Natural killer cell (primary cell): ENCODE measurements at regions of chr1 and their contacts with region 1.

Region 1: DNA sequence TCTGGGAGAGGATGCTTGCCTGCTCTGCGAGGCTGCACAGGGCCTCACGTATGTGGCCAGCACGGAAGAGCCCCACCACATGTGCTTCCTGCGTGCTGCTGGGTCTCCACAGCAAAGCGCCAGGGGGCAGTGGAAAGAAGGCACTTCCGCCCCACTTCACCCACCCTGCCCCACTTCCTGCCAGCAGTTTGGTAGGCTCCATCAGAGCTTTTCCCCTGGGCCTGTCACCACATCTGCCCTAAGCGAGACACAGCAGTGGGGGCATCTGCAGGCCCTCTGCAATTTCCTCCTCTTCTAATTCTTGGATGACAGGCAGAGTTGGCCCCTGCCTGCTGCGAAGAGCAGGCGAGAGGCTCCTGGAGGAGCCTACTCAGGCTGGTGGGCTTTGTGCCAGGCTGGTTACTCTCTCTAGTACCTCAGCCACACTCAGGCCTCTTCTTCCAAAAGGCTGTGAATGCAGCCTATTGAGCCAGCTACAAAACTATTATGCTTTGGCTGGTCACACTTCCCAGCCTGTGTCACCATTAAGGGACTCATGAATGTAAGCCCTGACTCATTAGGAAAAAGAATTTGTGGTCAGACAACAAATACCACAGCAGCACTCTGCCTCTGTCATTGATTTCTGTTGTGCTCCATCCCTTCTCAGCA is 25.0 kb downstream of the CD244 start:
- DNase-seq: peak; percentile 76 to 94
- ATAC-seq: peak; percentile 87 to 97 (median 95)
- H3K4me3 ChIP-seq: no peak overlapping the region
- H3K4me3 Mint-ChIP-seq: peak overlapping the region; percentile 83
- H3K27ac ChIP-seq: peak overlapping the region; percentile 70
- H3K27ac Mint-ChIP-seq: peak overlapping the region in 1 of 2 donors; percentile 95
- H3K4me1 ChIP-seq: peaks cover 80% of the 10 kb centered on the region
- H3K4me1 Mint-ChIP-seq: peaks cover 85 to 87% of the 10 kb centered on the region in 2 donors
- H3K27me3 ChIP-seq: no peaks in the 10 kb centered on the region
- H3K27me3 Mint-ChIP-seq: no peaks in the 10 kb centered on the region
- CTCF ChIP-seq: peak; percentile 42

Region 2: GRCh38 chr1:160795951-160796383 is 41.7 kb before region 1 on chr1 and contains the start of gene LY9:
- intact Hi-C with region 1: loop called (anchors 5 kb)
- DNase-seq: peak; percentile 66 to 96
- ATAC-seq: peak; percentile 84 to 93 (median 92)
- H3K4me3 ChIP-seq: peak within 1 kb of the TSS; percentile 39
- H3K4me3 Mint-ChIP-seq: peak within 1 kb of the TSS; percentile 90
- H3K27ac ChIP-seq: peak within 1 kb of the TSS; percentile 94
- H3K27ac Mint-ChIP-seq: peak within 1 kb of the TSS; percentile 91 to 95
- H3K4me1 ChIP-seq: peaks cover 49% of the 10 kb centered on the region
- H3K4me1 Mint-ChIP-seq: peaks cover 59 to 70% of the 10 kb centered on the region in 2 donors
- H3K27me3 ChIP-seq: no peaks in the 10 kb centered on the region
- H3K27me3 Mint-ChIP-seq: no peaks in the 10 kb centered on the region
- CTCF ChIP-seq: no peak
- total RNA-seq, gene LY9: 30.3 to 47.1 (median 34.4) TPM

Region 3: GRCh38 chr1:160862203-160863060 is 24.8 kb after region 1 on chr1 and contains the start of gene CD244:
- intact Hi-C with region 1: loop called (anchors 1 kb)
- DNase-seq: peak; percentile 79 to 81
- ATAC-seq: peak; percentile 88 to 97 (median 95)
- H3K4me3 ChIP-seq: peak within 1 kb of the TSS; percentile 66
- H3K4me3 Mint-ChIP-seq: peak within 1 kb of the TSS; percentile 97
- H3K27ac ChIP-seq: peak within 1 kb of the TSS; percentile 74
- H3K27ac Mint-ChIP-seq: peak within 1 kb of the TSS in 1 of 2 donors; percentile 93
- H3K4me1 ChIP-seq: peaks cover 65% of the 10 kb centered on the region
- H3K4me1 Mint-ChIP-seq: peaks cover 54 to 64% of the 10 kb centered on the region in 2 donors
- H3K27me3 ChIP-seq: no peaks in the 10 kb centered on the region
- H3K27me3 Mint-ChIP-seq: no peaks in the 10 kb centered on the region
- CTCF ChIP-seq: no peak
- total RNA-seq, gene CD244: 131 to 193 (median 150) TPM

Region 4: GRCh38 chr1:160877221-160877620 is 39.5 kb after region 1 on chr1:
- intact Hi-C with region 1: loop called (anchors 1 kb)
- DNase-seq: peak in 1 of 2 donors; percentile 75
- ATAC-seq: peak; percentile 82 to 97 (median 91)
- H3K4me3 ChIP-seq: no peak overlapping the region
- H3K4me3 Mint-ChIP-seq: no peak overlapping the region
- H3K27ac ChIP-seq: no peak overlapping the region
- H3K27ac Mint-ChIP-seq: peak overlapping the region in 1 of 2 donors; percentile 14
- H3K4me1 ChIP-seq: peaks cover 16% of the 10 kb centered on the region
- H3K4me1 Mint-ChIP-seq: peaks cover 16 to 17% of the 10 kb centered on the region in 2 donors
- H3K27me3 ChIP-seq: no peaks in the 10 kb centered on the region
- H3K27me3 Mint-ChIP-seq: no peaks in the 10 kb centered on the region
- CTCF ChIP-seq: peak; percentile 73

Region 5: DNA sequence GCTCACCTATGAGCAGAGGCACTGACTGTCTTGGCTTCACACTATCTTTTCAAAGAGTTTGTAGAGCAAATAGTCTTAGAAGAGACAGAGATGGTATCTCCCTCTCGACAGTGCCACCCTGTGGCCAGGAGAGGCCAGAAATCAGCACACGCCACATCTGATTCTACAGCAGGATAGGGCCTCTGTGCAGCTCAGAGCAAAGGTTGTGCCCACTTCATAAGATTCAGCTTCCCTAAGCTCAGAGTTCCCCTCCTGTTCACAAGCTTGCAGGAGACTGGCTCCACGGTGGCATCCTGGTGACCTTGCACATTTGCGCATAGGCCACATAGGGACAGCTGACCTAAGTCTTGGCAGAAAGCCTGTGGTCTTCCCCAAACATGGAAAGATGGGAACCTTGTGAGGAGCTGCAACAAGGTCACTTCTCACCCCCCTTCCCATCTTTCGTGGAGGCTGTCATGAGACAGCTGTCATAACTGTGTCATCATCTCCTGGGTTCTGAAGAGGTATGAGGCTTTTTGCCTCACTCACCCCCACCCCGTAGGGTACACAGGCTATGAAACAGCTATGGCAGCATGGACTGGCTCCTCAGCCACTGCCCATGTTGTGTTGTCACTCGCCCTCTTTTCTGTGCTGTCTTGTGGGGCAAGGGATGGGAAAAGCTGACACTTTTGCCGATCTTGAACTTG is 113.9 kb after region 1 on chr1:
- intact Hi-C with region 1: loop called (anchors 1 kb)
- DNase-seq: peak; percentile 58 to 85
- ATAC-seq: peak; percentile 83 to 84 (median 84)
- H3K4me3 ChIP-seq: no peak overlapping the region
- H3K4me3 Mint-ChIP-seq: no peak overlapping the region
- H3K27ac ChIP-seq: no peak overlapping the region
- H3K27ac Mint-ChIP-seq: no peak overlapping the region
- H3K4me1 ChIP-seq: peaks cover 15% of the 10 kb centered on the region
- H3K4me1 Mint-ChIP-seq: peaks cover 27 to 30% of the 10 kb centered on the region in 2 donors
- H3K27me3 ChIP-seq: no peaks in the 10 kb centered on the region
- H3K27me3 Mint-ChIP-seq: peaks cover 2 to 15% of the 10 kb centered on the region in 2 donors
- CTCF ChIP-seq: peak; percentile 68

Region 6: DNA sequence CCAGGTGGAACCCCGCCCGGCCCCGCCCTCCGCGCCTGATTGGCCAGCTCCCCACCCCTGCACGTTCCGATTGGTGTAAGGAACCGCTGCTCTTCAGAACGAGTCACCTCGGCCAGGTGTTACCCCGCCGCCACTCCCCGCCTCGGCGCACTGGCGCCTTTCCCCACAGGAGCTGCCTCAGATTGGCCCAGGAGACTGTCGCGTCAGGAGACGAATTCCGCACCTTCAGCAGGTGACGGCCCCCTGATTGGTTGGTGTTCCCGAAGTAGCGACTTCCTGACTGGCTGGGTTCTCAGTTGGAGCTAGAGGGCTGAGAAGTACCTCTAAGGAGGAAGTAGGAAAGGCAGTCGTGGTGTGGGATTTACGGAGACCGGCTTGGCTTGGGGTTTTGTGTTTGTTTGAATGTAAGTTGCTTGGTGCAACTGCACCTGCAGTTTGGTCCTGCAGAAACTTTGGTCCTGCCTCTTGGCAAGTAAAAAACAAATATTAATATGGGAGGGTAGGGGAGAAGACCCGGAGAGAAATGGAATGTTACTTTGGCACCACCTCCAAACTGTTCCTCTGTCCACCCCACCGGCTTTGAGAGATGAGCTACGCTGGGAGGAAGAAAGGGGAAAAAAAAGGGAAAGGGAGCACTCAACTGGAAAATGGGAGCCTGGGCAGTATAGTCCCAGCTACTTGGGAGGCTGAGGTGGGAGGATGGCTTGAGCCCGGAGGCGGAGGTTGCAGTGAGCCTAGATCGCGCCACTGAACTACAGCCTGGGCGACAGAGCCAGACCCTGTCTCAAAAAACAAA is 183.7 kb after region 1 on chr1:
- intact Hi-C with region 1: no loop called
- DNase-seq: peak; percentile 71 to 93
- ATAC-seq: peak; percentile 88 to 94 (median 93)
- H3K4me3 ChIP-seq: peak overlapping the region; percentile 87
- H3K4me3 Mint-ChIP-seq: peak overlapping the region; percentile 95
- H3K27ac ChIP-seq: peak overlapping the region; percentile 74
- H3K27ac Mint-ChIP-seq: peak overlapping the region; percentile 89 to 90
- H3K4me1 ChIP-seq: peaks cover 23% of the 10 kb centered on the region
- H3K4me1 Mint-ChIP-seq: peaks cover 28 to 38% of the 10 kb centered on the region in 2 donors
- H3K27me3 ChIP-seq: no peaks in the 10 kb centered on the region
- H3K27me3 Mint-ChIP-seq: no peaks in the 10 kb centered on the region
- CTCF ChIP-seq: no peak